Psoas muscle (tissue), 8 donors: ENCODE measurements at regions of chr2 and their contacts with region 1.

Region 1: GRCh38 chr2:181058378-181059269 is 78.2 kb downstream of the UBE2E3 start:
- DNase-seq: no peak
- ATAC-seq: peak in 3 of 4 donors; percentile 40 to 85 (median 69)
- H3K4me3 ChIP-seq: no peak overlapping the region
- H3K27ac ChIP-seq: no peak overlapping the region
- H3K4me1 ChIP-seq: peaks cover 4% of the 10 kb centered on the region
- H3K27me3 ChIP-seq: no peaks in the 10 kb centered on the region
- CTCF ChIP-seq: peak; percentile 79

Region 2: GRCh38 chr2:180125245-180125962 is 933.2 kb before region 1 on chr2:
- intact Hi-C with region 1: loop called (anchors 2 to 10 kb)
- DNase-seq: peak; percentile 36 to 67
- ATAC-seq: peak; percentile 87 to 96 (median 90)
- H3K4me3 ChIP-seq: no peak overlapping the region
- H3K27ac ChIP-seq: no peak overlapping the region
- H3K4me1 ChIP-seq: no peaks in the 10 kb centered on the region
- H3K27me3 ChIP-seq: no peaks in the 10 kb centered on the region
- CTCF ChIP-seq: peak; percentile 52

Region 3: DNA sequence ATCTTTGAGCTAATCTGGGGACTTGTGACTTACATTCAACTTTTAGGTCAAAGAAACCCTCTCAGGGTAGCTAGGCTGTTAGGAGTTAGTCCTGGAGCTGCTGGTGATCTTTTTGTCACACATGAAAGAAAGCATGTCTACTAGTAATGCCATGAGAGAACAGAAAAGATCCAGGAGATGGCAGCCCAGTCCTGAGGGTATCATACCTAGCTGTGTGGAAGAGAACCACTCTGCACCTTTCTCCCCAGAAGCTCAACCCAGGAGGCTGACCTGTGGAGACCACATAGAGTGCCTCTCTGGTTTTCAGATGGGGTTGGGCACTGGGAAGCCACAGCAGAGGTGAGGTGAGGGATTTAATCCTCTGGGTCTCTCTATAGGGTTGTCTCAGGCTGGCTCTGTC is 538.4 kb before region 1 on chr2:
- intact Hi-C with region 1: loop called (anchors 10 kb)
- DNase-seq: no peak
- ATAC-seq: peak in 3 of 4 donors; percentile 47 to 64 (median 58)
- H3K4me3 ChIP-seq: no peak overlapping the region
- H3K27ac ChIP-seq: no peak overlapping the region
- H3K4me1 ChIP-seq: no peaks in the 10 kb centered on the region
- H3K27me3 ChIP-seq: no peaks in the 10 kb centered on the region
- CTCF ChIP-seq: peak; percentile 20

Region 4: DNA sequence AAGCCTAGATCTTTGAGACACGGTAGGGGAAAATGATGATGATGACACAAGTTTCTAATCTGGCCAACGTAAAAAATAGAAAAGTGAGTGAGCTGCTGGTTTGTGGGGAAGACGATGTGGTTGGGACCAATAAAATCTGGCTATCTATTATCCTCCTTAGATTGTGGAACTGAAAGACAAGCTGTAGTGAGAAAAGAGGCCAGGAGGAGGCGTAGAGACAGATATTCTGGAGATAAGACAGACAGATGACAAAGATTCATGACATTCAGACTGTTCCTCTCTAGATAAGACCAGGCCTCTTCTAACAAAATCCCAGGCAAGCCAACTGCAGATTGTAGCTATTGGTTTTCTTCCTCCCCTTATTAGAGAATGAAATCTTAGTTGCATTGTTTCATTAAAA is 454.5 kb before region 1 on chr2:
- intact Hi-C with region 1: loop called in 1 of 2 experiments (anchors 10 kb)
- DNase-seq: no peak
- ATAC-seq: no peak
- H3K4me3 ChIP-seq: no peak overlapping the region
- H3K27ac ChIP-seq: no peak overlapping the region
- H3K4me1 ChIP-seq: no peaks in the 10 kb centered on the region
- H3K27me3 ChIP-seq: no peaks in the 10 kb centered on the region
- CTCF ChIP-seq: peak; percentile 19